Body of pancreas (tissue), 4 donors: ENCODE measurements at regions of chr15 and their contacts with region 1.

Region 1: DNA sequence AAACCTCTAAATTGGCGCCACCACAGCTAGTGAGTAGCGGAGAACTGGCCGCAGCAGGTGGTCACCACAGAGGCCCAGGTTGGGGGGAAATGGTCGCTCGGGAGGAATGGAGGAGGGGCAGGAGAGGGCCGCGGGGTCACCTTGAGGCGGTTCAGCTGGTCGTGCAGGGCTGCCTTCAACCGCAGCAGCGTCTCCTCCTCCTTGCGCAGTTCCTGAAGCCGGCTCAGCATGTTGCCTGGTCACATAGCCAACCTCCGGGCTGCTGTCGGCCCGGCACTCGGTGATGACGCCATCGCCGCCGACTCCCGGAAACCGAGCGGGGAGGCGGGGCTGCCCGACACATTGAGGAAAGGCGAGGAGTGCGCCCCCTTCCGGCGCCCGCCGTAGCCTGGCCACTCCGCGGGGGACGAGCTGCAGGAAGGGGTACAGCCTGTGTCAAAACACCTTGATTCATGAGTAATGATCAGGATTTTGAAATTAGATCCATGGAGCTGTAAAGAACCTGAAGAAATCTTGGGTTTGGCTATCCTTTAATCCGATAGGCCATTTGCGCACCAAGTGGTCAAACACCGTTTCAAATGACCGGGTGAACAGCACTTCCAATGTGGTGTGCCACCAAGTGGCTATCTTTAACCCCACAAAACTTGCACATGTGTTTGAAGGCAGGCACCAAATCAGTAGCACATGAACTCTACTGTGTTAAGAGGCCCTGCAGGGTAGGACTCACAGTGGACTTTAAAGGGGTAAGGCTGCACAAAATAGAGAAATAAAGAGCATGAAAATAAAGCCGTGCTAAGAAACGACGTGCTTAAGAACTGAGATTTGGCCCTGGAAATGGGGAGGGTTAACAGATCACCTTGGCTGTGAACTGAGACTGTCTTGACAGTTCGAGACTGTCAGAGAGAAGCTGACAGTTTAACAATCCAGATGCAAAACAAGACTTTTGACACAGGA is at the start of gene SNAPC5:
- DNase-seq: peak; percentile 97 to 98 (median 98)
- ATAC-seq: peak; percentile 96
- H3K4me3 ChIP-seq: peak within 1 kb of the TSS; percentile 50 to 73
- H3K27ac ChIP-seq: peak within 1 kb of the TSS; percentile 82 to 89 (median 88)
- H3K4me1 ChIP-seq: peaks cover 40% of the 10 kb centered on the region
- H3K27me3 ChIP-seq: no peaks in the 10 kb centered on the region
- CTCF ChIP-seq: peak; percentile 97 to 99 (median 98)
- POLR2A ChIP-seq: peak; percentile 65 to 86 (median 86)
- total RNA-seq, gene SNAPC5: 13.5 to 14.5 TPM

Region 2: DNA sequence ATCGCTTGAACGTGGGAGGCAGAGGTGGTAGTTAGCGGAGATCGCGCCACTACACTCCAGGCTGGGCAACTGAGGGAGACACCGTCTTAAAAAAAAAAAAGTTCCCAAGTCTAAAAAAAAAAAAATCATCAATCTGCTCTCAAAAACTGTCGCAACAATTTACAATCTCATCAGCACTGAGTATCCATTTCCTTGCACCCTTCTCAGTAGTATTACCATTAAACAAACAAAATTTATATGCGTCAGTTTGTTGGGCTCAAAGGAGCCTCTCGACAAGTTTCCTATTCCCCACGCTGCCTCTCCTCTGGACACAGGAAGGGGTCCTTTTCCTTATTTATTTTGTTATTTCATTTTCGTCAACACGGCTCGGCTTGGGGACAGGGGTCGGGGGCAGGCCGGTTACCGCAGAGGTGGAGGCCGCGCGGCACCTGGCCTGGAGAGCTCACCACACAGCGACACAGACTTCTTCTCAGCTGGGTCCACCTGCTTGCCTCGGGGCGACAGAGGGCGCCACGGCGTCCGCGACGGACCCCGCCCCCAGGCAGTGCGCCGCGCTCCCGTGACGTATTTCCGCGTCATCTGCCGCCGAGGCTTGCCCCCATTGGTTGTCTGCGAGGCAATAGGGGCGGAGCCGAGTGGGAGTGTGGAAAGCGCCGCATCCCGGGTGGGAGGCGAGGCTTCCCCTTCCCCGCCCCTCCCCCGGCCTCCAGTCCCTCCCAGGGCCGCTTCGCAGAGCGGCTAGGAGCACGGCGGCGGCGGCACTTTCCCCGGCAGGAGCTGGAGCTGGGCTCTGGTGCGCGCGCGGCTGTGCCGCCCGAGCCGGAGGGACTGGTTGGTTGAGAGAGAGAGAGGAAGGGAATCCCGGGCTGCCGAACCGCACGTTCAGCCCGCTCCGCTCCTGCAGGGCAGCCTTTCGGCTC is 111.3 kb before region 1 on chr15 and contains the start of gene MAP2K1:
- intact Hi-C with region 1: loop called (anchors 10 kb)
- DNase-seq: peak; percentile 98 to 99 (median 98)
- ATAC-seq: peak; percentile 96
- H3K4me3 ChIP-seq: peak within 1 kb of the TSS; percentile 67 to 80
- H3K27ac ChIP-seq: peak within 1 kb of the TSS; percentile 82 to 95 (median 90)
- H3K4me1 ChIP-seq: peaks cover 29% of the 10 kb centered on the region
- H3K27me3 ChIP-seq: no peaks in the 10 kb centered on the region
- CTCF ChIP-seq: peak; percentile 50 to 91 (median 76)
- POLR2A ChIP-seq: peak; percentile 81 to 91 (median 90)
- total RNA-seq, gene MAP2K1: 25.2 to 29.0 TPM

Region 3: GRCh38 chr15:66670762-66671580 is 173.2 kb after region 1 on chr15:
- intact Hi-C with region 1: no loop called
- DNase-seq: peak; percentile 87 to 93 (median 90)
- ATAC-seq: peak; percentile 93
- H3K4me3 ChIP-seq: no peak overlapping the region
- H3K27ac ChIP-seq: peak overlapping the region in 1 of 4 donors; percentile 34
- H3K4me1 ChIP-seq: peaks cover 7% of the 10 kb centered on the region
- H3K27me3 ChIP-seq: no peaks in the 10 kb centered on the region
- CTCF ChIP-seq: no peak
- POLR2A ChIP-seq: no peak